Esophagus squamous epithelium (tissue), 5 donors: ENCODE measurements at regions of chr15 and their contacts with region 1.

Region 1: DNA sequence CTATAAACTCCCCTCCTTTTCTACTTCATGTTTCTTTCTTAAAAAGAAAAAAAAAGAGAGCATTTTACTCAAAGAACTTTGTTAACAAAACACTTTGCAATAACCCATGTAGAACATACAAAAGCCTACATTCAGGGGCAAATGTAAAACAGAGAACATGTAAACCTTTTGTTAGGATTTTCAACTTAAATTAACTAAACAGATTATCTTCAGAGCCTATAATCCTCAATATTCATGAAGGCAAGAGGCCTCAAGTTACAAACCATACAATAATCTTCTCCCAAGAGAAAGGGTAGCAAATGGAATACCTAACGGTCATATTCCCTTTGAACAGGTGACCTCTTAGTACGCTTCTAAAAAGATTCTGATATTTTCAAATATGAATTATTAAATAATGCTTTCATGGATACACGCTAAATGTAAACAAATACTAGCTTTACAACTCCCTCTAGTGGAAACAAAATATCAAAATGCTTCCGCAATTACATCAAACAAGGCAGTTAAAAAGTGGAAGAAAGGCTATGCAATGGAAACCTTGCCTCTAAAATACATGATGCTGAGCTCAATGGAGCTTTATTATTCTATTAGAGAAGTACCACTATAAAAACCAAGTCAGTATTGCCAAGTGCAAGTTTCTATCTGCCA is 9.9 kb downstream of the CEP152 start:
- DNase-seq: no peak
- H3K4me3 ChIP-seq: no peak overlapping the region
- H3K27ac ChIP-seq: no peak overlapping the region
- H3K4me1 ChIP-seq: peaks cover 0 to 8% (median 0%) of the 10 kb centered on the region in 3 donors
- H3K27me3 ChIP-seq: no peaks in the 10 kb centered on the region
- CTCF ChIP-seq: peak in 5 of 6 experiments; percentile 23 to 59 (median 40)
- POLR2A ChIP-seq: no peak

Region 2: GRCh38 chr15:48352474-48353072 is 448.4 kb before region 1 on chr15:
- intact Hi-C with region 1: loop called (anchors 10 kb)
- DNase-seq: no peak
- H3K4me3 ChIP-seq: no peak overlapping the region
- H3K27ac ChIP-seq: no peak overlapping the region
- H3K4me1 ChIP-seq: peaks cover 0 to 7% (median 0%) of the 10 kb centered on the region in 3 donors
- H3K27me3 ChIP-seq: no peaks in the 10 kb centered on the region
- CTCF ChIP-seq: peak; percentile 56 to 80 (median 68)
- POLR2A ChIP-seq: no peak